CD8-positive, alpha-beta T cell (primary cell): ENCODE measurements at regions of chr9 and their contacts with region 1.

Region 1: DNA sequence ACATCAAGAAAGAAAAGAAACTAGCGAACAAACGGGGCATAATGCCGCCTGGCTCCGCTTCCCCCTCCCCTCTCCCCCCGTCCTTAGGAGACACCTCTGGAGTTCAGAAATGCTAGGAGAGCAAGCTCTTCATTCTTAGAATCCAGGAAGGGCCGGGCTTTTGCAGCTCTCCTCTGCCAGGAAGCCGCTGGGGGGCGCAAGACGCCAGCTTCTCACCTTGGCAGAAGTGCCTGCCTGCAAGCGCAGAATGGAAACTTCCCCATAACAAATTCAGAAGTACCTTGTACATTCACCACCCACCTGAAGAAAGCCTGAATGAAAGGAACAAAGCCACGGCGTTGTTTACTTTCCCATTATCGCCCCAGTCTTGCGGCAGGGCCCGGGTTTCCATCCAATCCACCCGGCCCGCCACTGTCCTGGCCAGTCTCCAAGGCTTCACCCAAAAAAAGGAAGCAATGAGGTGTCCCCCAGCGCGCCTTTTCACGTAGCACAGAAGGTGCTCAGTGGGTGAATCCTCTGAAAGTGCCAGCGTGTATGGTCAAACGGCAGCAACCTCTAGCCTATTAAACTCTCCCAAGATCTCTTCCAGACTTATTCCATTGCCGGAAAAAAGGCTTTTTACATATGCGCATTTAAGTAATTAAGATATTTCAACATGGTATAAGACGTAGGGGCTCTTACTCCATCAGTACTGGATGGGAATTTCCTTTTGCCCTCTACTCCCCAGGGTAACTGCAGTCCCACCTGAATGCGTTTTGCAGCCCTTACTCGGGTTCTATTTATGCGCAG is 1.6 kb upstream of the GADD45G start:
- DNase-seq: peak; percentile 67 to 89 (median 88)
- ATAC-seq: peak; percentile 21
- H3K4me3 ChIP-seq: peak overlapping the region; percentile 50 to 64
- H3K4me3 Mint-ChIP-seq: peak overlapping the region; percentile 79
- H3K27ac ChIP-seq: no peak overlapping the region
- H3K27ac Mint-ChIP-seq: peak overlapping the region; percentile 72
- H3K4me1 ChIP-seq: peaks cover 37% of the 10 kb centered on the region
- H3K4me1 Mint-ChIP-seq: peaks cover 27% of the 10 kb centered on the region
- H3K27me3 ChIP-seq: peaks cover 0 to 9% of the 10 kb centered on the region in 2 experiments
- H3K27me3 Mint-ChIP-seq: peaks cover 3% of the 10 kb centered on the region
- CTCF ChIP-seq: peak; percentile 76

Region 2: DNA sequence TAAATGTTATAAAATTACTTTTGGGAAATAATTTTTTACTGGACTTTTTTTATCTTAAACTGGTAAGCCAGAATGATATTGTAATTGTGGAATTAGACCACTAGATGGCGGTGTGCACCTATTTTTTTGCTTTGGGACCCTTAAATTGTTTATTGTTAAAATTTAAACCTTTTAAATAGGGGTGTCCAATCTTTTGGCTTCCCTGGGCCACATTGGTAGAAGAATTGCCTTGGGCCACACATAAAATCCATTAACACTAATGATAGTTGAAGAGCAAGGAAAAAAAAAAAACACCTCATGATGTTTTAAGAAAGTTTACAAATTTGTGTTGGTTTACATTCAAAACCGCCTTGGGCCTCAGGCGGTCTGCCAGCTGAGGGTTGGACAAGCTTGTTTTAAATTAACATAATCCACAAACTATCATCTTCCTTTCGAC is 26.8 kb before region 1 on chr9:
- CTCF ChIA-PET with region 1: interaction called, 21 read pairs
- POLR2A ChIA-PET with region 1: no interaction called
- intact Hi-C with region 1: loop called in 1 of 2 experiments (anchors 2 kb)
- DNase-seq: peak in 3 of 9 experiments; percentile 28 to 66 (median 59)
- ATAC-seq: no peak
- H3K4me3 ChIP-seq: no peak overlapping the region
- H3K4me3 Mint-ChIP-seq: no peak overlapping the region
- H3K27ac ChIP-seq: no peak overlapping the region
- H3K27ac Mint-ChIP-seq: no peak overlapping the region
- H3K4me1 ChIP-seq: peaks cover 19% of the 10 kb centered on the region
- H3K4me1 Mint-ChIP-seq: peaks cover 19% of the 10 kb centered on the region
- H3K27me3 ChIP-seq: no peaks in the 10 kb centered on the region
- H3K27me3 Mint-ChIP-seq: peaks cover 15% of the 10 kb centered on the region
- CTCF ChIP-seq: peak; percentile 94

Region 3: DNA sequence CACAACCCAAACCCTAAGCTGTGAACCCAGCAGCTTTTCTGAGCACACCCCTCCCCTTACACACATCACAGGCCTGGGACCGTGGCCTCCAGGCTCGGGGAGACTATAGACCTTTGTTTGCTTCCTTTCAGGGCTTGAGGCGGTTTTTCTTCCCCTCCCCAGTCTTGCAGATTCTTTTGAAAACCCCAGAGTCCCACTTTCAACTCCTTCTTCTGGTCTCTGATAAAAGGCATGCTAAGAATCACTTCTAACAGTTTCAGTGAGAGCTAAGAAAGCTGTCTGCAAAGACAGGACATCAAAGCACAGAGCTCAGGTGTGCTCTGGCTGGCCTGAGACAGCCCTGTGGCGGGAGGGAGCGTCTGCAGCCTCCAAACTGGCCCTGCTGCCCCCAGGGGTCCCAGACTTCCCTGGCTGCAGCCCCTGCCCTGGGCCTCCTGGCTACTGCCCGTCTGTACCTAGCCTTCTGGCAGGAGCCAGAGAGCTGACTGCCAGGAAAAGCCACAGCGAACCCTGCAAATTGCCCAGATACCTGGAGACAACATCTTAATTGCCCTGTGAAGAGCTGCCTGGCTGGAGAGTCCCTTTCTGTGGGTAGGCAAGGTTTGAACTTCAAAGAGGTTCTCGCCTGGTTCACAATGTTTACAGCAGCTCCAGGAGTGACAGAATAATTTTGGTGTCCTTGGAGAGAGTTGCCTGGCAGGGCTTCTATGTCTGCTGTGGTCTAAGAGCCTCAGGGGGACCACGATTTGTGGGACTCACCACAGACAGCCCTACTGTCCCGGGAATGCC is 140.6 kb after region 1 on chr9:
- CTCF ChIA-PET with region 1: interaction called, 4 read pairs
- POLR2A ChIA-PET with region 1: interaction called, 3 read pairs
- intact Hi-C with region 1: loop called (anchors 2 to 10 kb)
- DNase-seq: peak; percentile 26 to 86 (median 55)
- ATAC-seq: peak; percentile 82
- H3K4me3 ChIP-seq: peak overlapping the region in 1 of 2 experiments; percentile 28
- H3K4me3 Mint-ChIP-seq: peak overlapping the region; percentile 61
- H3K27ac ChIP-seq: peak overlapping the region in 1 of 2 experiments; percentile 40
- H3K27ac Mint-ChIP-seq: peak overlapping the region; percentile 61
- H3K4me1 ChIP-seq: peaks cover 70% of the 10 kb centered on the region
- H3K4me1 Mint-ChIP-seq: peaks cover 80% of the 10 kb centered on the region
- H3K27me3 ChIP-seq: no peaks in the 10 kb centered on the region
- H3K27me3 Mint-ChIP-seq: no peaks in the 10 kb centered on the region
- CTCF ChIP-seq: no peak

Region 4: DNA sequence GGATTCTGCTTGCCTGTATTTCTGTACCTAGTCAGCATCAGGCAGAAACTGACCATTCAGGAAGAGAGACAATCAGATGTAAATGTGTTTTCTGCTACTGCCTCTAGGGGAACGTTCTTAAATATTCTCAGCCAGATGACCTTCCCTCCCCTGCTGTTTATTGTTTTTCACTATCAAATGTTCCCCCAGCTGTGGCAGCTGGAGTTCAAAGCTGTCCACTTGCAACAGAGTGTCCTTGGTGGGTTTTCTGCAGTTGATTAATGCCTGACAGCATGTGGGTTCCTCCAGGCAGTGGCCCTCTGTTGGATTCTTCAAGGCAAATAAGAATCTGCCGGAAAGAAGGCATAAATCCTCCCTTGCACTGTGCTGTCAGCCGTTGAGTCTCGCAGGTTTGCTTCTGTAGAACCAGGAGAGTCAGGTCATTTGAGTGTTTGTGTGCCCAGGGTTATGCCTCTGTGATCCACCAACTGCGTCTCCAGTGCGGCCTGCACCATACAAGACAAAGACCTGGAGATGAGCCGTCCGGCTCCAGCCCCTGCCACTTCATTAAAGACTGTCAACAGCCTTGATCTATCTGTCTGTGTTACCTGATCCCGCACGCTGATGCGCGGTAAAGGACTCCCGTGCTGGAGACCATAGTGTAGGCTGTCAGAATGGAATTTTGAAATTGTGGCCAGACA is 205.0 kb after region 1 on chr9:
- CTCF ChIA-PET with region 1: no interaction called
- POLR2A ChIA-PET with region 1: no interaction called
- intact Hi-C with region 1: no loop called
- DNase-seq: peak in 1 of 9 experiments; percentile 21
- ATAC-seq: no peak
- H3K4me3 ChIP-seq: no peak overlapping the region
- H3K4me3 Mint-ChIP-seq: no peak overlapping the region
- H3K27ac ChIP-seq: no peak overlapping the region
- H3K27ac Mint-ChIP-seq: no peak overlapping the region
- H3K4me1 ChIP-seq: no peaks in the 10 kb centered on the region
- H3K4me1 Mint-ChIP-seq: peaks cover 6% of the 10 kb centered on the region
- H3K27me3 ChIP-seq: no peaks in the 10 kb centered on the region
- H3K27me3 Mint-ChIP-seq: peaks cover 6% of the 10 kb centered on the region
- CTCF ChIP-seq: no peak

Region 5: GRCh38 chr9:89999534-90000370 is 396.6 kb after region 1 on chr9:
- CTCF ChIA-PET with region 1: interaction called, 4 read pairs
- POLR2A ChIA-PET with region 1: no interaction called
- intact Hi-C with region 1: loop called in 1 of 2 experiments (anchors 5 kb)
- DNase-seq: peak in 8 of 9 experiments; percentile 11 to 64 (median 33)
- ATAC-seq: peak; percentile 73
- H3K4me3 ChIP-seq: peak overlapping the region; percentile 31 to 35
- H3K4me3 Mint-ChIP-seq: peak overlapping the region; percentile 79
- H3K27ac ChIP-seq: peak overlapping the region in 1 of 2 experiments; percentile 62
- H3K27ac Mint-ChIP-seq: peak overlapping the region; percentile 76
- H3K4me1 ChIP-seq: peaks cover 18% of the 10 kb centered on the region
- H3K4me1 Mint-ChIP-seq: peaks cover 26% of the 10 kb centered on the region
- H3K27me3 ChIP-seq: no peaks in the 10 kb centered on the region
- H3K27me3 Mint-ChIP-seq: no peaks in the 10 kb centered on the region
- CTCF ChIP-seq: no peak

Region 6: DNA sequence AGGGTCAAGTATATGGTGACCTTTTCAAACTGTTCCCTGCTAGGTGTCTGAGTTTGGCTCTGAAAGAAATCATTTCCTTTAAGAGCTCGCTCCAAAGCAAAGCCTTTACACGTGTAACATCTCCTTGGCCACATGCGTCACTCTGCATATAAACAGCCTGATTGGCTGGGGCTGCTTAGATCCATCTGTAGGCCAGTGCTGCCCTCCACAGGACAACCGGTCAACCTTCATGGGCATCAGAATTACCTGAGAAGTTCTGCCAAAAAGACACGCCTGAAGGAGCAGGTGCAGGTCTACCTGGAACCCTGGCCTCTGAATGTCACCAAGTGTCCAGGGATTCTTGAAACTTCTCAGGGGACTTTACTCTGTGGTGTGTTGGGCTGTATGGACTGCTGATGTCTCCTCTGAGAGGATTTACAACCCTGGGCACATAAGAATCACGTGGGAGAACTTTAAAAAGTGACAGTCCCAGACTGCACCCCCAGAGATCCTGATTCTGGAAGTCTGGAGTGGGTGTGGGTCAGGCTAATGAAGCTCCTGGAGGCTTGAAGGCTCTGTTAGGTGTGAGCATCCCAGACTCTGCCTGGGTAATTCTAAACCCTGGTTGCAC is 499.2 kb after region 1 on chr9:
- CTCF ChIA-PET with region 1: interaction called, 66 read pairs
- POLR2A ChIA-PET with region 1: interaction called, 9 read pairs
- intact Hi-C with region 1: loop called (anchors 1 kb)
- DNase-seq: peak; percentile 50 to 88 (median 71)
- ATAC-seq: peak; percentile 100
- H3K4me3 ChIP-seq: no peak overlapping the region
- H3K4me3 Mint-ChIP-seq: no peak overlapping the region
- H3K27ac ChIP-seq: no peak overlapping the region
- H3K27ac Mint-ChIP-seq: no peak overlapping the region
- H3K4me1 ChIP-seq: peaks cover 4% of the 10 kb centered on the region
- H3K4me1 Mint-ChIP-seq: peaks cover 5% of the 10 kb centered on the region
- H3K27me3 ChIP-seq: no peaks in the 10 kb centered on the region
- H3K27me3 Mint-ChIP-seq: peaks cover 13% of the 10 kb centered on the region
- CTCF ChIP-seq: peak; percentile 58